Activated CD4-positive, alpha-beta T cell treated with anti-CD3 and anti-CD28 coated beads, Interleukin-2, amount 10 ng/mL, durations not matched to agents 24 days and 14 days (primary cell): ENCODE measurements at regions of chr7 and their contacts with region 1.

Region 1: DNA sequence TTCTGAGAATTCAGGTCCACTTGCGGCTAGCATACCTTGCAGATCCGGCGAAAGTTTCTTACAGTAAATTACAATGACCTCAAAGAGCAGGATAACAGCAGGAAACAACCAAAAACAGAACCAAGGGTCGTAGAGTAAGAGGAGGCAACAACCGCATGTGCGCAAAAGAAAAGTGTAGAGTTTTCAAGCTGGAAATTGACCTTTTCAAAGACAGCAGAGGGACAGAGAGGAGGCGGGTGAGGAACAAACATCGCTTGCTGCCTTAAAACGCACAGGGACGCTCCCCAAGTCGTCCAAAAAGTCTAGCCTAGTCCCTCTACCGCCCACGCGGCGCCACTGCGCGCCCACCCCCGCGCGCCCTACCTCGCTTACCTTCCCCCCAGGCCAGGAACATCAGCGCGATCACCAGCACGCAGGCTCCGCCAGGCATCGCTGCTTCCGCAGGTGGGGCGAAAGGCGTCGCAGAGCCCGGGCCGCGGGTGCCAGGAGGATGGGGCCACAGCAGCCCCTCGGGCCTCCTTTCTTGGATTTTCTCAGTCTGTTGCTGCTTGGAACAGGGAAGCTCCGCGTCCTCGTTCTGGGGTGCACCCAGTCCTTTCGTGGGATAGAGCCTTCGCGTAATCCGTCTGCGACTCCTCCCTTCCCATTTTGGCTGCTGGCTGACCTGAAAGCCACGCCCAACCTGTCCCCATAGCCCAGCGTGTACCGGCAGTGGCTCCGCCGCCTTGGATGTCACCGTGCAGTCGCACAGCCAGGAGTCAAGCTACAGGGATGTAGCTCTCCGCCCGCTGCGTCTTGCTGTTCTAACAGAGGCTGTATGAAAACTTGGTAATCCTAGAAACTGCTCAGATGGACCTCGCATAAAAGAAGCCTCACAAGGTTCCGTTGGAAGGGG is at the start of gene VWDE:
- DNase-seq: peak; percentile 87
- H3K4me3 Mint-ChIP-seq: peak within 1 kb of the TSS; percentile 93
- H3K27ac Mint-ChIP-seq: peak within 1 kb of the TSS; percentile 80
- H3K4me1 Mint-ChIP-seq: peaks cover 18% of the 10 kb centered on the region
- H3K27me3 Mint-ChIP-seq: peaks cover 28% of the 10 kb centered on the region
- total RNA-seq, gene VWDE: 1.8 and 1.9 TPM in 2 replicates

Region 2: DNA sequence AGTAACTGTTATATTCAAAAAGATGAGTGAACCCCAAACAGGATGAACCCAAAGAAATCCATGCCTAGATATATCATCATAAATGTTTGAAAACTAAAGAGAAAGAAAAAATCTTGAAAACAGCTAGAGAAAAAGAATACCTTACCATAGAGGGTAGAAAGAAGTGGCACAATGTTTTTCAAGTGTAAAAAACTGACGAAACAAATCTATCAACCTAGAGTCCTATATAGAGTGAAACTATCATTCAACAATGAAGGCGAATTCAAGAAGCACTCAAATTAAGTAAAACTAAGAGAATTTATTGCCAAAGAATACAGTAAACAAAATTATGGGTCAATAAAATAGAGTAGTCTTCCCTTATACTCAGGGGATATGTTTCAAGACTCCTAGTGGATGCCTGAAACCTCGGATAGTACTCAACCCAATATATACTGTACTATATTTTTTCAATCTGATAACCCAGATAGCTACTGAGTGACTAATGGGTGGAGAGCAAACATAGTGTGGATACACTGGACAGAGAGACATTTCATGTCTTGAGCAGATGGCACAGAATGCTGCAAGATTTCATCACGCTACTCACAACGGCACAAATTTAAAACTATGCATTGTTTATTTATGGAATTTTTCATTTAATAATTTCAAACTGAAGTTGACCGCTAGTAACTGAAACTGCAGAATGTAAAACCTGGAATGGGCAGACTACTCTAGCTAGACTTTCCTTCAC is 245.0 kb before region 1 on chr7:
- intact Hi-C with region 1: no loop called
- DNase-seq: no peak
- H3K4me3 Mint-ChIP-seq: no peak overlapping the region
- H3K27ac Mint-ChIP-seq: no peak overlapping the region
- H3K4me1 Mint-ChIP-seq: peaks cover 2% of the 10 kb centered on the region
- H3K27me3 Mint-ChIP-seq: peaks cover 6% of the 10 kb centered on the region

Region 3: DNA sequence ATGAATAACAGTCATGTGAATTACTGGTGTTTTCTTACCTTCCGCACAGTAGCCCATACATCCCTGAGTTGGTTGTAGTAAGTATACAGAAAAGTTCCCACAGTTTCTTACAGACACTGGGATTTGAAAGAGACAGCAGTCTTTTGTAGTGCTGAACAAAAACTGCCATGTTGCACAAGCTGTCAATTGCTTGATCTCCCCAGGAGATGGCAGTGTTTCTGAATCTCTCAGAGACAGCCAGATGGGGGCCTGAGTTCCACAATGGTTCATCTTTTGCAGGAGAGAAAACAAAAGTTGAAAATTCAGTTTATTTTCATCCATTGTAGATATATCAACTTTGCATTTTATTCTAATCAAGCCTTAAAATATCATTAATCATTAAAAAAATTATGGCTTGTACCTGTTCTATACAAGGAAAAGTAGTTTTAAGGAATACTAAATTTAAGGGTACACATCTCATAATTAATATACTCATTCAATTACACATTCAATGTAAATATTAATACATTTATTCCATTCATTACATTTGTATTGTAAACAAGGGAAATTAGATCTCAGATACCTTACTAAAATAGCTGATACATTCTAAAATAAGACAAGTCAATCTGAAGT is 14.3 kb before region 1 on chr7:
- intact Hi-C with region 1: loop called (anchors 1 kb)
- DNase-seq: peak; percentile 84
- H3K4me3 Mint-ChIP-seq: no peak overlapping the region
- H3K27ac Mint-ChIP-seq: no peak overlapping the region
- H3K4me1 Mint-ChIP-seq: no peaks in the 10 kb centered on the region
- H3K27me3 Mint-ChIP-seq: no peaks in the 10 kb centered on the region

Region 4: DNA sequence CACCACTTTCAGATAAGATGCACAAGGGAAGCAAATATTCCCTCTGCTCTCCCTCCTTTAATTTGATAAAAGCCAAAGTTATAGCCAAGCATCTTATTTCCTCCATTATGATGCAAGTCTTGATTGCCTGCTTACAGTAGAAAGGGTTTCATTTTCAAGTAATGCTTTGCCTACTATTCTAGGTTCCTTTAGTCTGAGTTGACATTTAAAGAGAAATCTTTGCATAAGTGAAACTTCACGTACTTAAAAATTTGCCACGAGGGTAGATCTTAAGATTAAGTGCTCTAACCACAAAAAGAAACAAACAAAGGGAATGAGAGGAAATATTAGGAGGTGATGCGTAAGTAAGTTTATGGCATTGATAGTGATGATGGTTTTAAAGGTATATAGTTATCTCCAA is 78.2 kb after region 1 on chr7:
- intact Hi-C with region 1: loop called (anchors 5 kb)
- DNase-seq: no peak
- H3K4me3 Mint-ChIP-seq: peak overlapping the region; percentile 41
- H3K27ac Mint-ChIP-seq: no peak overlapping the region
- H3K4me1 Mint-ChIP-seq: peaks cover 8% of the 10 kb centered on the region
- H3K27me3 Mint-ChIP-seq: peaks cover 2% of the 10 kb centered on the region

Region 5: GRCh38 chr7:12695965-12696364 is 292.4 kb after region 1 on chr7:
- intact Hi-C with region 1: no loop called
- DNase-seq: no peak
- H3K4me3 Mint-ChIP-seq: no peak overlapping the region
- H3K27ac Mint-ChIP-seq: no peak overlapping the region
- H3K4me1 Mint-ChIP-seq: peaks cover 3% of the 10 kb centered on the region
- H3K27me3 Mint-ChIP-seq: no peaks in the 10 kb centered on the region